ENCODE measurements at regions of chr19 and their contacts with region 1.

Region 1: GRCh38 chr19:53147645-53148044 is 11.2 kb downstream of the ZNF347 start:
- DNase-seq: no peak
- ATAC-seq: no peak
- H3K4me3 ChIP-seq: no peak overlapping the region
- H3K4me3 Mint-ChIP-seq: no peak overlapping the region
- H3K27ac ChIP-seq: no peak overlapping the region
- H3K27ac Mint-ChIP-seq: no peak overlapping the region
- H3K4me1 ChIP-seq: no peaks in the 10 kb centered on the region
- H3K4me1 Mint-ChIP-seq: no peaks in the 10 kb centered on the region
- H3K27me3 ChIP-seq: no peaks in the 10 kb centered on the region
- H3K27me3 Mint-ChIP-seq: no peaks in the 10 kb centered on the region
- CTCF ChIP-seq: no peak

Region 2: GRCh38 chr19:53057904-53058580 is 89.6 kb before region 1 on chr19:
- CTCF ChIA-PET with region 1: no interaction called
- POLR2A ChIA-PET with region 1: no interaction called
- intact Hi-C with region 1: no loop called
- DNase-seq: no peak
- ATAC-seq: no peak
- H3K4me3 ChIP-seq: no peak overlapping the region
- H3K4me3 Mint-ChIP-seq: no peak overlapping the region
- H3K27ac ChIP-seq: no peak overlapping the region
- H3K27ac Mint-ChIP-seq: no peak overlapping the region
- H3K4me1 ChIP-seq: peaks cover 4% of the 10 kb centered on the region
- H3K4me1 Mint-ChIP-seq: no peaks in the 10 kb centered on the region
- H3K27me3 ChIP-seq: peaks cover 8 to 11% of the 10 kb centered on the region in 2 experiments
- H3K27me3 Mint-ChIP-seq: peaks cover 10% of the 10 kb centered on the region
- CTCF ChIP-seq: no peak

Region 3: DNA sequence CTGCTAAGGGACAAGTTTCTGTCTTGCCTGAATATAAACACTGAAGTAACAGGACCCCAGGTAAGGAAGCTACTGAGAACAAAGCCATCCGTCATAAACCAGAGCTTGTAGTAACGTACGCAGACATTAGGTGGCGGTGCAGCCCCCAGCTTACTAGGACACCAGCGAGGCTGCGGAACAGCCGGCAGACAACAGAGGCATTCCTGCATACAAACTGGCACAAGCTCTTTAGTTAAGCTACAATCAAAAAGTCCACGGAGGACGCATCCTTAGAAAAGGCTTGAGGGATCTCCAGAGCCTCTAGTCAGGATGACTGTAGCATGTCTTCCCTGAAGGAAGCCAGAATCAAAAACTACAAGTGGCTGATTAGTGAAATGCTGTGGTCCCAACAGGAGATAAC is 70.7 kb before region 1 on chr19:
- CTCF ChIA-PET with region 1: no interaction called
- POLR2A ChIA-PET with region 1: no interaction called
- intact Hi-C with region 1: loop called in 1 of 2 experiments (anchors 10 kb)
- DNase-seq: peak in 1 of 14 experiments; percentile 14
- ATAC-seq: peak; percentile 34
- H3K4me3 ChIP-seq: no peak overlapping the region
- H3K4me3 Mint-ChIP-seq: no peak overlapping the region
- H3K27ac ChIP-seq: no peak overlapping the region
- H3K27ac Mint-ChIP-seq: no peak overlapping the region
- H3K4me1 ChIP-seq: no peaks in the 10 kb centered on the region
- H3K4me1 Mint-ChIP-seq: peaks cover 14% of the 10 kb centered on the region
- H3K27me3 ChIP-seq: no peaks in the 10 kb centered on the region
- H3K27me3 Mint-ChIP-seq: no peaks in the 10 kb centered on the region
- CTCF ChIP-seq: no peak

Measured in CD4-positive, alpha-beta T cell (primary cell).